Dendritic cell treated with granulocyte-macrophage colony-stimulating factor and Interleukin-4, amounts not matched to agents 40 ng/mL and 50 ng/mL, for 4 days (primary cell): ENCODE measurements at regions of chr3 and their contacts with region 1.

Region 1: GRCh38 chr3:190617185-190617584 is 103.3 kb downstream of the IL1RAP start:
- H3K4me3 Mint-ChIP-seq: no peak overlapping the region
- H3K27ac Mint-ChIP-seq: peak overlapping the region; percentile 80
- H3K4me1 Mint-ChIP-seq: peaks cover 58% of the 10 kb centered on the region
- H3K27me3 Mint-ChIP-seq: no peaks in the 10 kb centered on the region

Region 2: GRCh38 chr3:190443257-190443656 is 173.9 kb before region 1 on chr3:
- intact Hi-C with region 1: no loop called
- H3K4me3 Mint-ChIP-seq: no peak overlapping the region
- H3K27ac Mint-ChIP-seq: no peak overlapping the region
- H3K4me1 Mint-ChIP-seq: peaks cover 8% of the 10 kb centered on the region
- H3K27me3 Mint-ChIP-seq: peaks cover 2% of the 10 kb centered on the region

Region 3: GRCh38 chr3:190575437-190576185 is 41.6 kb before region 1 on chr3:
- intact Hi-C with region 1: loop called (anchors 5 kb)
- H3K4me3 Mint-ChIP-seq: no peak overlapping the region
- H3K27ac Mint-ChIP-seq: peak overlapping the region; percentile 39
- H3K4me1 Mint-ChIP-seq: peaks cover 7% of the 10 kb centered on the region
- H3K27me3 Mint-ChIP-seq: no peaks in the 10 kb centered on the region

Region 4: DNA sequence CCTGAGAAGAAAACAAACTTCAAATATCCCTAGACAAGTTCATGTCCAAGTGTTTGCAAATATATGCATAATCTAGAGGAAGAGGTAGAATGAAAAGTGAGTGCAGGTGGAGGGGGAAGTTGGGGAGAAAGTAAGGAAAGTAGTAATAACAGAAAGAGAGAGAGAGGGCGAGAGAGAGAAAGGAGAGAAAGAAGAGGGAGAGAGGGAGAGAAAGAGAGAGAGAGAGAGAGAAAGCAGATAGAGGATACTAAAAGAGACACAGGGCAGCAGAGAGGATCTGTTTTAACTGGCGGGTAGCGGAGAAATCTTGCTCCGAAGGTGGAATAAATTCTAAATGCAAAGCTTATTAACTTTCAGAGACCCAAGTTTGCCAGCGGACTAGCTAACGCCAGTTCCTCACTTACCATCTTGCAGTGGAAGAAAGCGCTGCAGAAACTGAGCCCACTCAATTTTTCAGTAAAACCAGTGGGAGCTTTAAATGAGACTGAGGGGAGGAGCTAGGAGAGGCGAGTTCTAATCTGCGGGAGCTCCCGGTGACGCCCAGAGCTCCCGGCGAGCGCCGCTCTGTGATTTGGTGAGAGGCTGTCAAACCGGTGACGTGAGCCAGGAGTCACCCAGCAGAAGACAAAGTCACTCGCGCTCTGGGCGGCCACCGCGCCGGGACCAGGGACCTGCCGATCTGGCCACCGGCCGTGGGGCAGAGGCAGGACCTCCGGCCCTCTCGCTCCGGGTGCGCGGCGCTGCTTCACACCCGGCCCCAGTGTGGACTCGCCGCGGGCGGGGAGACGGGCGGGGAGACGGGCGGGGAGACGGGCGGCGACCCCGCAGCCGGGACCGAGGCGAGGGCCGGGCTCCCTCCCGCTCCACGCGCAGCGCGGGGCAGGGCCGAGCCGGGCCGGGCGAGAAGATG is 245.3 kb after region 1 on chr3 and contains the start of gene GMNC:
- intact Hi-C with region 1: no loop called
- H3K4me3 Mint-ChIP-seq: peak within 1 kb of the TSS; percentile 78
- H3K27ac Mint-ChIP-seq: peak within 1 kb of the TSS; percentile 70
- H3K4me1 Mint-ChIP-seq: peaks cover 9% of the 10 kb centered on the region
- H3K27me3 Mint-ChIP-seq: peaks cover 45% of the 10 kb centered on the region